Activated B cell treated with CpG ODN at 0.5 μM for 24 hours (primary cell): ENCODE measurements at regions of chr15 and their contacts with region 1.

Region 1: GRCh38 chr15:84658080-84658787 is at the start of gene NMB:
- DNase-seq: peak; percentile 83
- ATAC-seq: peak; percentile 76
- H3K4me3 Mint-ChIP-seq: peak within 1 kb of the TSS; percentile 83
- H3K27ac Mint-ChIP-seq: peak within 1 kb of the TSS; percentile 88
- H3K4me1 Mint-ChIP-seq: peaks cover 41% of the 10 kb centered on the region
- H3K27me3 Mint-ChIP-seq: no peaks in the 10 kb centered on the region
- CTCF ChIP-seq: no peak
- total RNA-seq, gene NMB: 2.9 and 3.8 TPM in 2 replicates

Region 2: DNA sequence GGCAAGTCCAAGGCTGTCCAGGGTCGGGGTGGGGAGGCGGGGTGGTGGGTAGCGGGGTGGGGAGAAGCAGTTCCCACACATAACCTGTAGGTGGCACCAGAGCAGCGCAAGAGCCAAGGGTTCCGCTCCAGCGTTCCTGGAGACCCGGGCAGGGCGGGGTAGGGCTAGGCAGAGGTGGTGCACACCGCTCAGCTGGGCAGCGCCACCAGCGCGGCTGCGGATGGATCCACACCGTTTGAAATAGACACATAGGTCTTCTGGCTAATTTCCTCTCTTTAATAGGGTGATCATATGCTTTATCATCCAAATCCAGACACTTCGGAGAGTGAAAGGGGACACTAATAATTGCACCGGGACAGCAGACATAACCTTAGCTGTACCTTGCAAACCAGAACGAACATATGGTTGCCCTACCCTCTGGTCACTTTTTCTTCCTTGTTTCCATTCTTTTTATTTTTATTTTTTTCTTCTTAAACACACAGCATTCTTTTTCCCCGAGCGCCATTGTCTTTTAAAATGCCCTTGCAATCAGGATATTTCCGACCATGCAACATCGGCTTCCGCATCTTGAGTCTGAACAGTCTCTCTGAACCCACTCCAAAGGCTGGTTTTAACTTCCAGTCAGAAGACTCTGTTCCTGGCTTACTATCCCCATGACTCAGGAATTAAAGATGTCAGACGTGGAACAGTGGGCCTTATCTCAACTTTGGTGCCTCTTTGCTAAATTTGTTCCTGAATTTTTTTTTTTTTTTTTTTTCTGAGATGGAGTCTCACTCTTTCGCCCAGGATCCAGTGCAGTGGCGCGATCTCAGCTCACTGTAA is 70.0 kb before region 1 on chr15:
- CTCF ChIA-PET with region 1: interaction called, 4 read pairs
- POLR2A ChIA-PET with region 1: interaction called, 4 read pairs
- intact Hi-C with region 1: loop called (anchors 1 kb)
- DNase-seq: peak; percentile 79
- ATAC-seq: peak; percentile 100
- H3K4me3 Mint-ChIP-seq: peak overlapping the region; percentile 72
- H3K27ac Mint-ChIP-seq: no peak overlapping the region
- H3K4me1 Mint-ChIP-seq: peaks cover 4% of the 10 kb centered on the region
- H3K27me3 Mint-ChIP-seq: peaks cover 3% of the 10 kb centered on the region
- CTCF ChIP-seq: peak; percentile 39

Region 3: GRCh38 chr15:84633311-84634227 is 24.7 kb before region 1 on chr15:
- CTCF ChIA-PET with region 1: interaction called, 4 read pairs
- POLR2A ChIA-PET with region 1: interaction called, 61 read pairs
- intact Hi-C with region 1: loop called (anchors 1 kb)
- DNase-seq: peak; percentile 67
- ATAC-seq: peak; percentile 45
- H3K4me3 Mint-ChIP-seq: peak overlapping the region; percentile 91
- H3K27ac Mint-ChIP-seq: peak overlapping the region; percentile 87
- H3K4me1 Mint-ChIP-seq: peaks cover 50% of the 10 kb centered on the region
- H3K27me3 Mint-ChIP-seq: no peaks in the 10 kb centered on the region
- CTCF ChIP-seq: no peak

Region 4: DNA sequence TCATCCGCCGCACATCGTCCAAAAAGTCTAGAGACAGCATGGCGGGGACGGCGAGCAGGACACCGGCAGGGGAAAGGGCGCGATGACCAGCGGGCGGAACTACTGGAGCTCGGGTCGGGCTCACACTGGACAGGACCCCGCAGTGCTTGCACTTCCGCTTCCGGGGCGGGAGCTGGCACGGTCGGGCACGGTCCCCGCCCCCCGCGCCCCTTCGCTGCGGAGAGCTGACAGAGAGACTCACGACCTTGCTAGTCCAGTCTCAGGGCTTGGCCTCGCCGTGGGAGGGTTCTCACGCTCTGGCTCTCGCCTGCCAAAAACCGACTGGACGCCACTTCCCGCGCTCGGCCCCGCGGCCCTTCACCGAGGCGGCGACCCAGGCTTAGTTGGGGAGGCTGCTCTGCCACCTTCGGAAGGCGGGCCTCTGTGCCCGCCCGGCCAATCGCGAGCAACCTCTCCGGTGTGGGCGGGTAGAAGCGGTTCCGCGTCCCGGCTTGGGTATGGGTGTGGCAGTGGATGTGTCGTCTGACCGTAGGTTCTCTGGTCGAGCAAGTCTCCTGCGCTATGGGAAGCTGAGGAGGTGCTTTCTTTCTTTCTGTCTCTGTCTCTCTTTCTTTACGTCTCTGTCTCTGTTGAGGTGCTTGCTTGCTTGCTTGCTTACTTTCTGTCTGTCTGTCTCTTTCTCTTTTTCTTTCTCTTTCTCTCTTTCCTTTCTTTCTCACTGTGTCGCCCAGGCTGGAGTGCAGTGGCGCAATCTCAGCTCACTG is 58.0 kb after region 1 on chr15 and contains the start of gene SEC11A:
- CTCF ChIA-PET with region 1: no interaction called
- POLR2A ChIA-PET with region 1: interaction called, 70 read pairs
- intact Hi-C with region 1: loop called (anchors 1 kb)
- DNase-seq: peak; percentile 96
- ATAC-seq: peak; percentile 95
- H3K4me3 Mint-ChIP-seq: peak within 1 kb of the TSS; percentile 93
- H3K27ac Mint-ChIP-seq: peak within 1 kb of the TSS; percentile 92
- H3K4me1 Mint-ChIP-seq: peaks cover 49% of the 10 kb centered on the region
- H3K27me3 Mint-ChIP-seq: no peaks in the 10 kb centered on the region
- CTCF ChIP-seq: no peak
- total RNA-seq, gene SEC11A: 68.9 and 71.2 TPM in 2 replicates

Region 5: GRCh38 chr15:84748274-84749110 is 90.3 kb after region 1 on chr15 and contains the start of gene ZNF592:
- CTCF ChIA-PET with region 1: no interaction called
- POLR2A ChIA-PET with region 1: interaction called, 14 read pairs
- intact Hi-C with region 1: loop called (anchors 1 kb)
- DNase-seq: peak; percentile 88
- ATAC-seq: peak; percentile 62
- H3K4me3 Mint-ChIP-seq: peak within 1 kb of the TSS; percentile 97
- H3K27ac Mint-ChIP-seq: peak within 1 kb of the TSS; percentile 99
- H3K4me1 Mint-ChIP-seq: peaks cover 70% of the 10 kb centered on the region
- H3K27me3 Mint-ChIP-seq: no peaks in the 10 kb centered on the region
- CTCF ChIP-seq: no peak
- total RNA-seq, gene ZNF592: 40.6 and 44.3 TPM in 2 replicates

Region 6: DNA sequence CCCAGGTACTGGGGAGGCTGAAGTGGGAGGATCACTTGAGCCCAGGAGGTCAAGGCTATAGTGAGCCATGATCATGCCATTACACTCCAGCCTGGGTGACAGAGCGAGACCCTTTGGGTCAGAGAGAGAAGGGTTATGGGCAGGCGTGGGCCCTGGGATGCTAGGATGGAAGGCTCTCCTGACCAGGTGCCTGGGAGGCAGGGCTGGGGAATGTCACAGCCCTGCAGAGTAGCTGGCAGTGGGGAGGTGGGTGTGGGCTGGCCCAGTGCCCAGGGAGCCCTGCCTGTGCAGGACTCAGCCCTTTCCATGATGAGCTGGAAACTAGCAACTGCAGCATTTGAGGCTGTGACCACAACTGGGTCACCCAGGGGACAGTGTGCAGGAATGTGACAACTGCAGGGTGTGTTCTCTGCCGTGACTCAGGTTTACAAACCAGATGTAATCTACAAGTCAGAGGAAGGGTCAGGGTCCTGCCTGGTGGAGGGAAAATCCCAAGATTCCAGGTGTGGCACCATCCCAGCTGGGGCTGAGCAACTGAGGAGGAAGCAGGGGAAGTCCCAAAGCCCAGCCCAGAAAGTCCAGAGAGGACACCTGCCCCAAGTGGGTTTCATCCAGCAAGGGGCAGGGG is 271.6 kb after region 1 on chr15:
- CTCF ChIA-PET with region 1: interaction called, 15 read pairs
- POLR2A ChIA-PET with region 1: no interaction called
- intact Hi-C with region 1: loop called (anchors 1 kb)
- DNase-seq: no peak
- ATAC-seq: no peak
- H3K4me3 Mint-ChIP-seq: no peak overlapping the region
- H3K27ac Mint-ChIP-seq: no peak overlapping the region
- H3K4me1 Mint-ChIP-seq: peaks cover 5% of the 10 kb centered on the region
- H3K27me3 Mint-ChIP-seq: no peaks in the 10 kb centered on the region
- CTCF ChIP-seq: no peak

Region 7: DNA sequence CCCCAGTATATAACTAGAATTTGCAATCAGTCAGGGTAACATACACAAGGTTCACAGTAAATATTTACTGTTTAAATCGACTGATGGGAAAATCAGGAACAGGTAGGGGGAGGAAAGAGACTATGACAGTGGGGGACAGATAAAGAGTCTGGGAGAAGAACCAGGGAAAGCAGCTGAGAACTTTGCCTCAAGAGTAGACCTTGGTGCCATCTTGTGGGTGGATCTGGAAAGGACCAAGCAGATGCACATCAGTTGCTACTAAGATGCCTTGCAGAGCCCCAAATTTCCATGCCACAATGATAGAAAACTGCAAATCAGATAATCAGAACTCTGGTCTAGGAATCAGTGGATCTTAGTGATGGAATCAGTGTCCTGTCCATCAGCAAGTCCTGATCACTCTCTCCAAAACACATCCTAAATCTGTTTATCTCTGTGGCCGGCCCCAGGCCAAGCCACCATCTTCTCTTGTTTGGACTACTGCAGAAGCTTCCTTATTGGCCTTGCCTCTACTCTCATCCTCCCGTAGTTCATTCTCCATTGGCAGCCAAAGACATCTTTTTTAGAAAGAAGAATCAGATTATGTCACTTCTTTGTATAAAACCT is 386.1 kb after region 1 on chr15:
- CTCF ChIA-PET with region 1: no interaction called
- POLR2A ChIA-PET with region 1: interaction called, 3 read pairs
- intact Hi-C with region 1: loop called (anchors 10 kb)
- DNase-seq: no peak
- ATAC-seq: peak; percentile 56
- H3K4me3 Mint-ChIP-seq: no peak overlapping the region
- H3K27ac Mint-ChIP-seq: no peak overlapping the region
- H3K4me1 Mint-ChIP-seq: peaks cover 31% of the 10 kb centered on the region
- H3K27me3 Mint-ChIP-seq: no peaks in the 10 kb centered on the region
- CTCF ChIP-seq: no peak